ENCODE measurements at regions of chrX and their contacts with region 1.

Region 1: GRCh38 chrX:46713672-46714490 is 45.0 kb downstream of the SLC9A7 start:
- DNase-seq: peak; percentile 57
- ATAC-seq: peak; percentile 46
- H3K4me3 ChIP-seq: peak overlapping the region in 2 of 5 experiments; percentile 7 to 10
- H3K4me3 Mint-ChIP-seq: peak overlapping the region; percentile 73
- H3K27ac ChIP-seq: peak overlapping the region; percentile 63 to 74
- H3K27ac Mint-ChIP-seq: peak overlapping the region; percentile 85
- H3K4me1 ChIP-seq: peaks cover 68 to 73% of the 10 kb centered on the region in 2 donors
- H3K4me1 Mint-ChIP-seq: peaks cover 80% of the 10 kb centered on the region
- H3K27me3 ChIP-seq: no peaks in the 10 kb centered on the region
- H3K27me3 Mint-ChIP-seq: no peaks in the 10 kb centered on the region
- CTCF ChIP-seq: no peak

Region 2: DNA sequence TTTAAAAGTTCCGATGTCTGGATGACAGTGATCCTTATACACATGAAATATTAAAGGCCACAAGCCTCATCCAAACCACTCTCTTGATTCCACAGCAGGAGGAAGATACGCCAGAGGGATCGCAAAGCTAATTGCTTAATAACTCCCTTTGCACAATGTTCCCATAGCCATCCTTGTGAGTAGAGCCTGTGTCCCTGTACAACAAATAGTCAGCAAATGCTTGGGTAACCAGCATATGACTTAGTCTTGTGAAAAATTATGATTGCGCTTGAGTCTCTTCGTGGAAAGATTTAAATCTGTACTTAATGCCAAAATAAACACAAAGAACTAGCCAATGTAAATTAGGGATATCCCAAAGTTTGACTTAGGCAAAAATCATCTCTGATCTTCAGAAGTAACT is 13.6 kb after region 1 on chrX:
- CTCF ChIA-PET with region 1: interaction called, 4 read pairs
- POLR2A ChIA-PET with region 1: no interaction called
- intact Hi-C with region 1: loop called (anchors 2 kb)
- DNase-seq: no peak
- ATAC-seq: no peak
- H3K4me3 ChIP-seq: no peak overlapping the region
- H3K4me3 Mint-ChIP-seq: no peak overlapping the region
- H3K27ac ChIP-seq: no peak overlapping the region
- H3K27ac Mint-ChIP-seq: no peak overlapping the region
- H3K4me1 ChIP-seq: peaks cover 12% of the 10 kb centered on the region in 2 donors
- H3K4me1 Mint-ChIP-seq: peaks cover 50% of the 10 kb centered on the region
- H3K27me3 ChIP-seq: no peaks in the 10 kb centered on the region
- H3K27me3 Mint-ChIP-seq: no peaks in the 10 kb centered on the region
- CTCF ChIP-seq: no peak

Region 3: GRCh38 chrX:46762963-46763362 is 49.1 kb after region 1 on chrX:
- CTCF ChIA-PET with region 1: no interaction called
- POLR2A ChIA-PET with region 1: no interaction called
- intact Hi-C with region 1: no loop called
- DNase-seq: no peak
- ATAC-seq: no peak
- H3K4me3 ChIP-seq: no peak overlapping the region
- H3K4me3 Mint-ChIP-seq: no peak overlapping the region
- H3K27ac ChIP-seq: no peak overlapping the region
- H3K27ac Mint-ChIP-seq: no peak overlapping the region
- H3K4me1 ChIP-seq: peaks cover 7 to 8% of the 10 kb centered on the region in 2 donors
- H3K4me1 Mint-ChIP-seq: peaks cover 9% of the 10 kb centered on the region
- H3K27me3 ChIP-seq: no peaks in the 10 kb centered on the region
- H3K27me3 Mint-ChIP-seq: no peaks in the 10 kb centered on the region
- CTCF ChIP-seq: no peak

Region 4: DNA sequence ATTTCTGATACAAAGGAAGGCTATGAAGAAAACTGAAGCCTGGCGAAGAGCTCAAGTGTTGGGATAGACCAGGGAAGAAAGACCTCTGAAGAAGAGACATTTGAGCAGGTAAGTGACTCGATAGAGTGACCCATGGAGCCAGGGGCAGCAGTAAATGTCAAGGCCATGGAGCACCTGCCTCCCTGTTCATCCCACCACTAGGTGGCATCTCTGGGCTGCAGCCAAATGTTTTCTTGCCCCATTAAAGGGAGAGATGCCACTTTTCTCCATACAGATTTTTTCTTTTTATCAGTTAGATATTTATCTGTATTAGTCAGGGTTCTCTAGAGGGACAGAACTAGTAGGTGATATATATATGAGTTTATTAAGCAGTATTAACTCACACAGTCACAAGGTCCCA is 1117.9 kb after region 1 on chrX:
- CTCF ChIA-PET with region 1: no interaction called
- POLR2A ChIA-PET with region 1: no interaction called
- intact Hi-C with region 1: no loop called
- DNase-seq: peak; percentile 66
- ATAC-seq: no peak
- H3K4me3 ChIP-seq: no peak overlapping the region
- H3K4me3 Mint-ChIP-seq: no peak overlapping the region
- H3K27ac ChIP-seq: no peak overlapping the region
- H3K27ac Mint-ChIP-seq: no peak overlapping the region
- H3K4me1 ChIP-seq: peaks cover 0 to 4% of the 10 kb centered on the region in 2 donors
- H3K4me1 Mint-ChIP-seq: peaks cover 8% of the 10 kb centered on the region
- H3K27me3 ChIP-seq: no peaks in the 10 kb centered on the region
- H3K27me3 Mint-ChIP-seq: no peaks in the 10 kb centered on the region
- CTCF ChIP-seq: peak; percentile 73